ENCODE measurements at regions of chr1 and their contacts with region 1.

Region 1: GRCh38 chr1:46179138-46180081 is 3.1 kb upstream of the P3R3URF start:
- DNase-seq: peak; percentile 80
- ATAC-seq: peak; percentile 78
- H3K4me3 ChIP-seq: peak overlapping the region in 1 of 5 experiments; percentile 35
- H3K4me3 Mint-ChIP-seq: no peak overlapping the region
- H3K27ac ChIP-seq: no peak overlapping the region
- H3K27ac Mint-ChIP-seq: no peak overlapping the region
- H3K4me1 ChIP-seq: peaks cover 12 to 16% of the 10 kb centered on the region in 2 donors
- H3K4me1 Mint-ChIP-seq: peaks cover 6% of the 10 kb centered on the region
- H3K27me3 ChIP-seq: no peaks in the 10 kb centered on the region
- H3K27me3 Mint-ChIP-seq: no peaks in the 10 kb centered on the region
- CTCF ChIP-seq: peak; percentile 94

Region 2: GRCh38 chr1:46036894-46037839 is 142.2 kb before region 1 on chr1:
- CTCF ChIA-PET with region 1: interaction called, 249 read pairs
- POLR2A ChIA-PET with region 1: interaction called, 3 read pairs
- intact Hi-C with region 1: loop called (anchors 1 kb)
- DNase-seq: peak; percentile 88
- ATAC-seq: peak; percentile 89
- H3K4me3 ChIP-seq: no peak overlapping the region
- H3K4me3 Mint-ChIP-seq: no peak overlapping the region
- H3K27ac ChIP-seq: no peak overlapping the region
- H3K27ac Mint-ChIP-seq: no peak overlapping the region
- H3K4me1 ChIP-seq: peaks cover 16 to 20% of the 10 kb centered on the region in 2 donors
- H3K4me1 Mint-ChIP-seq: peaks cover 11% of the 10 kb centered on the region
- H3K27me3 ChIP-seq: no peaks in the 10 kb centered on the region
- H3K27me3 Mint-ChIP-seq: no peaks in the 10 kb centered on the region
- CTCF ChIP-seq: peak; percentile 98

Region 3: DNA sequence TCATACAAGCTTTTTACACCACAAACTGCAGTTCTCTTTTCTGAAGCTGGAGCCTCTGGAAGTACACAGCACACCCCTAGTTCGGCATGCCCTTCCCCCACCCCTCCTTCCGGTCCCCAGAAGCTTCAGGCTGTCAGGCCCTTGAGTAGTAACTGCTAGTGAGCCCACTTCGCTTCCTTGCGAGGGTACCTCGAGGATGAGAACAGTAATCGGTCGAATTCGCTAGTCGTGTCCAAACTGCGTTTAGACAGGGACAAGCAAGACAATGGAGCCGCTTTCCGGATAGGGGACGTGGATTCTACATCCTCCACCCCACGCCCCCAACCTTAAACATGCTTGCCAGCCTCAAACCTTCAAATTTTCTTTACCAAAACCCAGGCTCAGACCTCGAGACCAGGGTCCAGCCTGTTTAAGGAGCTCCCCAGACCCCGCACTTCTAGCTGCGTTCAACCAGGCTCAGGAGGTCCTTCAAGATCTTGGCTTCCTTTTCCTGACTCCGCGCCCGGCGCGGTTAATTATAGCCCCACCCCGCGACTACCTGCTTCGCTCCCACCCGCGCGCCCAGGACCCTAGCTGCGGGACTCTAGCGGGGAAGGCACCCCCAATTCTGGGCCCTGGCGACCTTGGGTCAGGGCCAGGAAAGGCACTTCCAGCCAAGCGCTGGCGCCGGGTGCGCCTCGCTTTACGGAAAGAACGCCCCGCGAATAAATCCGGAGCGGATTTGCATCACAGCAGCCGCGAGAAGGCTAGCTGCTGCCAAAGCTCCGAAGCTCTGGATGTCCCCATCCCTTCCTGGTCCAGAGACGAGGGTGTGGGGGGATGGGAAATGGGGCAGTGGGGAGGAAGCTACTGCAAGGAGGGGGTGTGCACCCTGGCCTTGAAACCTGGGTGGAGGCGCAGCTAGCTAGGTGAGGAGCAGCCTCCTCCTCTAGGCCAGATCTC is 12.6 kb before region 1 on chr1:
- CTCF ChIA-PET with region 1: interaction called, 10 read pairs
- POLR2A ChIA-PET with region 1: no interaction called
- intact Hi-C with region 1: no loop called
- DNase-seq: peak; percentile 58
- ATAC-seq: peak; percentile 47
- H3K4me3 ChIP-seq: peak overlapping the region; percentile 50 to 86 (median 65)
- H3K4me3 Mint-ChIP-seq: peak overlapping the region; percentile 90
- H3K27ac ChIP-seq: peak overlapping the region; percentile 1 to 46
- H3K27ac Mint-ChIP-seq: peak overlapping the region; percentile 57
- H3K4me1 ChIP-seq: peaks cover 18 to 25% of the 10 kb centered on the region in 2 donors
- H3K4me1 Mint-ChIP-seq: peaks cover 27% of the 10 kb centered on the region
- H3K27me3 ChIP-seq: peaks cover 0 to 17% (median 0%) of the 10 kb centered on the region in 4 experiments
- H3K27me3 Mint-ChIP-seq: peaks cover 21% of the 10 kb centered on the region
- CTCF ChIP-seq: no peak

Region 4: GRCh38 chr1:46223472-46223943 is 44.1 kb after region 1 on chr1:
- CTCF ChIA-PET with region 1: interaction called, 16 read pairs
- POLR2A ChIA-PET with region 1: no interaction called
- intact Hi-C with region 1: loop called (anchors 1 kb)
- DNase-seq: peak; percentile 80
- ATAC-seq: peak; percentile 87
- H3K4me3 ChIP-seq: no peak overlapping the region
- H3K4me3 Mint-ChIP-seq: no peak overlapping the region
- H3K27ac ChIP-seq: no peak overlapping the region
- H3K27ac Mint-ChIP-seq: no peak overlapping the region
- H3K4me1 ChIP-seq: peaks cover 0 to 3% of the 10 kb centered on the region in 2 donors
- H3K4me1 Mint-ChIP-seq: peaks cover 1% of the 10 kb centered on the region
- H3K27me3 ChIP-seq: no peaks in the 10 kb centered on the region
- H3K27me3 Mint-ChIP-seq: no peaks in the 10 kb centered on the region
- CTCF ChIP-seq: peak; percentile 84

Region 5: GRCh38 chr1:46340404-46341221 is 161.2 kb after region 1 on chr1 and contains the start of gene NSUN4:
- CTCF ChIA-PET with region 1: no interaction called
- POLR2A ChIA-PET with region 1: no interaction called
- intact Hi-C with region 1: loop called (anchors 5 kb)
- DNase-seq: peak; percentile 94
- ATAC-seq: peak; percentile 79
- H3K4me3 ChIP-seq: peak within 1 kb of the TSS; percentile 69 to 99 (median 97)
- H3K4me3 Mint-ChIP-seq: peak within 1 kb of the TSS; percentile 100
- H3K27ac ChIP-seq: peak within 1 kb of the TSS; percentile 99 to 100
- H3K27ac Mint-ChIP-seq: peak within 1 kb of the TSS; percentile 99
- H3K4me1 ChIP-seq: peaks cover 10 to 21% of the 10 kb centered on the region in 2 donors
- H3K4me1 Mint-ChIP-seq: peaks cover 30% of the 10 kb centered on the region
- H3K27me3 ChIP-seq: no peaks in the 10 kb centered on the region
- H3K27me3 Mint-ChIP-seq: no peaks in the 10 kb centered on the region
- CTCF ChIP-seq: peak; percentile 64
- total RNA-seq, gene NSUN4: 30.1 and 33.7 TPM in 2 replicates